Left colon (tissue), 2 donors: ENCODE measurements at regions of chr7 and their contacts with region 1.

Region 1: GRCh38 chr7:41977151-41977651 is 259.8 kb downstream of the GLI3 start:
- DNase-seq: no peak
- ATAC-seq: no peak

Region 2: DNA sequence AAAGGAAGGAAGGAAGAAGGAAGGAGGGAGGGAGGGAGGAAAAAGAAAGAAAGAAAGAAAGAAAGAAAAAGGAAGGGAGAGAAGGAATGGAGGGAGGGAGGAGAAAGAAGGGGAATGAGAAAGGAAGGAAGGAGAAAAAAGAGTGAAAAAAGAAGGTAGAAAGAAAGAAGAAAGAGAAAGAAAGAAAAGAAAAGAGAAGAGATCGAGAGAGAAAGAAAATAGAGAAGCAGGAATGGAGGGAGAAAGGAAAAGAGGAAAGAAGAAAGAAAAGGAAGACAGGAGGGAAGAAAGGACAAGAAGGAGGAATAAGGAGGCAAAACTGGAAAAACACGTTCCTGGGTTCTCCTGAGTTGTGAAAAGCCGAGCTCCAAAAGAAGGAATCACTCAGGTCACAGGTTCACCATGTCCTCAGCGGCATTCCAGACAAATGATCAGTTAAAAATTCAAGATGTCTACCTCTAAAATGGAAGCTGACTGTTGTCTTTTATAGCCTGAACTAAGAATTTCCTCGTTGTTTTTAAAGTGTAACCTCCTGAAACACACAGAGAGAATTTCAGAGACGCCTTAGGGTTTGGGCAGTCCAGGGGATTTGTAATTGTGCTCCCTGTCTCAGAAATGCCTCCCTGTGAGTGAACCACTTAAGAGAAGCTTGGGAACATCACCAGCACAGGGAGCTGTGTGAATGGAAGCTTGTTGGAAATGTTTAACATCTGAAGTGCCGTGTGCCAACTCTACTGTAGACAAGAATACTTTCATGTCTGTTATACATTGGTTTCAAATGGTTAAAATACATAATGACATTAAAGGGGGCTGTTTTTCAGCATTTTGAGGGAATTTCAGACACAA is 355.0 kb before region 1 on chr7:
- intact Hi-C with region 1: no loop called
- DNase-seq: no peak
- ATAC-seq: no peak

Region 3: GRCh38 chr7:42071372-42072261 is 94.4 kb after region 1 on chr7:
- intact Hi-C with region 1: no loop called
- DNase-seq: no peak
- ATAC-seq: no peak

Region 4: DNA sequence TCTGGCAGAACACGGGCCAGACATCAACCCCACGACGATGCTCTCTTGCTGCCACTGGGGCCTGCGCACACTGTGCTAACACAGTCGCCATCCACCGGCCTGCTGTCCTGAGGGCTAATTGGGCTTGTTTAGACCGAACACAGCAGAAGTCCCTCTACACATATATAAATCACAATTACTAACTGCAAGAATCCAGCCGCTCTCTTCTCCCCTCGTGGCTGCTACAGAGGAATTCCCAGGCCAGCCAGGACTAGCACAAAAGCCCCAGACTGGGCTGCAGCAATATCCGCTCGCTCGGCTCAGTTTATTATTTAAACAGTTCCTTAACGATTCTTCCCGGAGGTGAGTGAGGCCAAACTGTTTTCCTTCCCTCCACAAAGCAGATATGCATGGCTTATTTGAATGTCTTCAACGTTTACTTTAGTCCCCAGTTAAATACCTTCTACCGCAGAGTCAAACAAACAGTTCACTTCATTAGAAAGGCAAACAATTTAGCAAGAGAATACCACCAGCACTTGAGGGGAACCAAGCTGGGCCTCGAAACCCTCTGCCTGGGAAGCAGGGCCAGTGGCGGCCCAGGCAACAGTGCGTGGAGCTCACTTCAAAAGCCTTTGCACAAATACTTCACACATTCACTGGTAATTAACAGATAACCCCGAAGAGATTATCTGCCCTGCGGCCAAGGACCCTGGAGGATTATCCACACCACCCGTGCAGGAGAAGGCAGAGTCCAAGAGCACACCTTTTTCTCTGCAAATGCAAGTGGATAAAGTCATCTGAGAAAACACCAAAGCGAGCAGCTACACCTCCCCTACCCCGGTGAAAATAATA is 114.5 kb after region 1 on chr7:
- intact Hi-C with region 1: no loop called
- DNase-seq: no peak
- ATAC-seq: peak; percentile 9

Region 5: GRCh38 chr7:42237162-42237821 is 260.1 kb after region 1 on chr7 and contains the start of gene GLI3:
- intact Hi-C with region 1: loop called in 1 of 2 experiments (anchors 10 kb)
- DNase-seq: peak; percentile 59 to 82
- ATAC-seq: peak; percentile 54
- total RNA-seq, gene GLI3: 2.2 to 8.2 TPM

Region 6: GRCh38 chr7:42690794-42691639 is 713.8 kb after region 1 on chr7:
- intact Hi-C with region 1: loop called in 1 of 2 experiments (anchors 10 kb)
- DNase-seq: no peak
- ATAC-seq: peak; percentile 60